Prostate gland (tissue), 2 donors: ENCODE measurements at regions of chr15 and their contacts with region 1.

Region 1: DNA sequence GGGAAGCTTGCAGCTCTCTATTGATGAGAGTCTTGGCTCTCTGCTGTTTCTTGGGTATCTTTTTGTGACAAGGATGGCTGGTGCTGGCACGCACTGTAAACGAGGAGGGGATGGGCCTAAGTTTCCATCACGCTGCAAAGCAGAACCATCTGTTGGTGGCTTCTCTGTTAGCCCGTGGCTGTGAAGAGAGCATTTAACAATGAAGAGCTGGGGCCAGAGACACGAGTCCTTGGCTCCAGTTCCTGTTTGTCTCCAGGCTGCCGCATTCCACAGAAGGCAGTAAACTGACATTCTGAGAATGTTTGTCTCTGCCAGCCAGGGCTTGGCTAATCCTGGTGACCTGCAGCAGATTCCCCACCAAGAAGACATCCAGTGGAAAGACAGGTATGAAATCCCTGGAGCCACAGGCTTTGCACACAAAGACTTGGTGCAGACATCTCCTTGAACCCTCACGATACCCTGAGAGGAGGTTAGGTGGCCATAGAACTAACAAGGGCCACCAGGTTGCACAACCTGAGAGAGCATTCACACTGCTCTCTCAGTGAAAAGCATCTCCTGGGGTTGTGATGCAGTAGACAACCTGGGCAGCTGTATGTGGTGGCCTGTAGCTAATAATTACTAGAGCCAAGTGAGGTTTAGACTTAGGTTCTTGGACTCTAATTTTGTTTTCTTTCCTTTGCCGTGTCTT is 130.9 kb downstream of the ASB7 start:
- DNase-seq: peak; percentile 85
- H3K4me3 ChIP-seq: no peak overlapping the region
- H3K27ac ChIP-seq: peak overlapping the region; percentile 69 to 74
- H3K4me1 ChIP-seq: peaks cover 13% of the 10 kb centered on the region
- H3K27me3 ChIP-seq: no peaks in the 10 kb centered on the region
- CTCF ChIP-seq: no peak
- POLR2A ChIP-seq: no peak

Region 2: GRCh38 chr15:100572362-100572983 is 160.8 kb before region 1 on chr15:
- intact Hi-C with region 1: no loop called
- DNase-seq: no peak
- H3K4me3 ChIP-seq: no peak overlapping the region
- H3K27ac ChIP-seq: no peak overlapping the region
- H3K4me1 ChIP-seq: no peaks in the 10 kb centered on the region
- H3K27me3 ChIP-seq: no peaks in the 10 kb centered on the region
- CTCF ChIP-seq: peak in 3 of 4 experiments; percentile 53 to 61 (median 56)
- POLR2A ChIP-seq: no peak

Region 3: GRCh38 chr15:100764778-100765466 is 31.7 kb after region 1 on chr15:
- intact Hi-C with region 1: loop called (anchors 5 kb)
- DNase-seq: no peak
- H3K4me3 ChIP-seq: no peak overlapping the region
- H3K27ac ChIP-seq: no peak overlapping the region
- H3K4me1 ChIP-seq: peaks cover 3% of the 10 kb centered on the region
- H3K27me3 ChIP-seq: no peaks in the 10 kb centered on the region
- CTCF ChIP-seq: no peak
- POLR2A ChIP-seq: no peak

Region 4: GRCh38 chr15:101570238-101570637 is 837.0 kb after region 1 on chr15:
- intact Hi-C with region 1: no loop called
- DNase-seq: no peak
- H3K4me3 ChIP-seq: no peak overlapping the region
- H3K27ac ChIP-seq: no peak overlapping the region
- H3K4me1 ChIP-seq: no peaks in the 10 kb centered on the region
- H3K27me3 ChIP-seq: no peaks in the 10 kb centered on the region
- CTCF ChIP-seq: no peak
- POLR2A ChIP-seq: no peak